GM12878 (cell line): ENCODE measurements at regions of chr21 and their contacts with region 1.

Region 1: GRCh38 chr21:14285147-14285761 is 69.3 kb downstream of the RBM11 start:
- DNase-seq: no peak
- ATAC-seq: no peak
- H3K4me3 ChIP-seq: no peak overlapping the region
- H3K27ac ChIP-seq: no peak overlapping the region
- H3K4me1 ChIP-seq: no peaks in the 10 kb centered on the region
- H3K27me3 ChIP-seq: 0 out of 4 replicates have a peak, but pooled peaks cover 0 to 2% of the 10 kb centered on the region in 2 experiments
- CTCF ChIP-seq: no peak
- EP300 ChIP-seq: no peak
- POLR2A ChIP-seq: no peak
- RAD21 ChIP-seq: no peak

Region 2: GRCh38 chr21:15468368-15468767 is 1183.1 kb after region 1 on chr21:
- CTCF ChIA-PET with region 1: no interaction called
- POLR2A ChIA-PET with region 1: no interaction called
- RAD21 ChIA-PET with region 1: no interaction called
- SMC1A ChIA-PET with region 1: no interaction called
- in situ Hi-C with region 1: no loop called
- intact Hi-C with region 1: loop called (anchors 10 kb)
- DNase-seq: no peak
- ATAC-seq: no peak
- H3K4me3 ChIP-seq: no peak overlapping the region
- H3K27ac ChIP-seq: no peak overlapping the region
- H3K4me1 ChIP-seq: no peaks in the 10 kb centered on the region
- H3K27me3 ChIP-seq: no peaks in the 10 kb centered on the region
- CTCF ChIP-seq: no peak
- EP300 ChIP-seq: no peak
- POLR2A ChIP-seq: no peak
- RAD21 ChIP-seq: no peak